Natural killer cell (primary cell): ENCODE measurements at regions of chr12 and their contacts with region 1.

Region 1: DNA sequence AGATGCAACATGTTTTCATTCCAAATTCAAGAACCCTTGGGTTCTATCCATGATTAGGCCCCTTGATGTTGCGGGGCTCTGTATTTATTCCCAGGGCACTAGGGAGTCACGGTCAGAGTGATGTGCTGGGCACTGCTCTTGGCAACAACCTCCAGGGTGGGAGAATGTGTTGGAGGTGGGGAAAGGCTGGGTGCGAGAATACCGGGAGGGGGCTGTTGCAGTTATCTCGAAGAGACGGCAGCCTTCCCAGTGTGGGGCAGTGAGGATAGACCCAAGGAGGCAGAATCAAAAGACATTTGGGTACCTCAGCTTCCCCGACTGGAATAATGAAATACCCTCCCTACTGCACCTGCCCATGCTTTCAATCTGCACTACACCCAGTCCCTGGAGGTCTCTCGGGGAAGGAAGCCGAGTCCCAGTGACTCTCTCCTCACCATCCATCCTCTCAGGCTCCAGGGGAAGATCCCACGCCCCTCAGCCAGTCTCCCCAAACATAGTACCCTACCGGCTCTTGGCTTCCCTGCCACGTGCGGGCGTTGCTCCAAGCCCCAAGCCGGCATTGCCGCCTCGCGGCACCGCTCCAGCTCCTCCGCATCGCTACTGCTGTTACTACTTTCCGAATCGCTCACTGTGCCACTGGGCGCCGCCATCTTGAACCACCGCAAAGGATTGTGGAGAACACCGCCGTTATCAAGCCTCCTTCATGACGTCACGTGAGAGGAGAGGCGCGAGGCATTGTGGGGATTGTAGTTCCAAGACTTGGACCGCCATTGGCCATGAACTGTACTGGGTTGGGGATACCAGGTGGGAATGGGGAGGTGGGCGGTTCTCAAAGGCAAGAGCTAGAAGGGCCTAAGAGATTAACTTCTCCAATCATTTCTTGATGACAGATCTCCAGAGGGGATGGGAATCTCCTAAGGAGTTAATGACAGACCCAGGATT is at the start of gene C12orf43:
- DNase-seq: peak; percentile 87 to 96
- ATAC-seq: peak; percentile 97 to 99 (median 98)
- H3K4me3 ChIP-seq: peak within 1 kb of the TSS; percentile 56
- H3K4me3 Mint-ChIP-seq: peak within 1 kb of the TSS; percentile 100
- H3K27ac ChIP-seq: peak within 1 kb of the TSS; percentile 71
- H3K27ac Mint-ChIP-seq: peak within 1 kb of the TSS; percentile 94 to 99
- H3K4me1 ChIP-seq: peaks cover 9% of the 10 kb centered on the region
- H3K4me1 Mint-ChIP-seq: peaks cover 10 to 19% of the 10 kb centered on the region in 2 donors
- H3K27me3 ChIP-seq: no peaks in the 10 kb centered on the region
- H3K27me3 Mint-ChIP-seq: no peaks in the 10 kb centered on the region
- CTCF ChIP-seq: no peak
- total RNA-seq, gene C12orf43: 16.0 to 19.9 (median 18.0) TPM

Region 2: GRCh38 chr12:121005346-121005815 is 10.7 kb before region 1 on chr12:
- intact Hi-C with region 1: no loop called
- DNase-seq: peak; percentile 45 to 65
- ATAC-seq: peak; percentile 65 to 87 (median 74)
- H3K4me3 ChIP-seq: no peak overlapping the region
- H3K4me3 Mint-ChIP-seq: no peak overlapping the region
- H3K27ac ChIP-seq: no peak overlapping the region
- H3K27ac Mint-ChIP-seq: peak overlapping the region in 1 of 2 donors; percentile 63
- H3K4me1 ChIP-seq: peaks cover 5% of the 10 kb centered on the region
- H3K4me1 Mint-ChIP-seq: peaks cover 0 to 11% of the 10 kb centered on the region in 2 donors
- H3K27me3 ChIP-seq: no peaks in the 10 kb centered on the region
- H3K27me3 Mint-ChIP-seq: no peaks in the 10 kb centered on the region
- CTCF ChIP-seq: peak; percentile 48

Region 3: DNA sequence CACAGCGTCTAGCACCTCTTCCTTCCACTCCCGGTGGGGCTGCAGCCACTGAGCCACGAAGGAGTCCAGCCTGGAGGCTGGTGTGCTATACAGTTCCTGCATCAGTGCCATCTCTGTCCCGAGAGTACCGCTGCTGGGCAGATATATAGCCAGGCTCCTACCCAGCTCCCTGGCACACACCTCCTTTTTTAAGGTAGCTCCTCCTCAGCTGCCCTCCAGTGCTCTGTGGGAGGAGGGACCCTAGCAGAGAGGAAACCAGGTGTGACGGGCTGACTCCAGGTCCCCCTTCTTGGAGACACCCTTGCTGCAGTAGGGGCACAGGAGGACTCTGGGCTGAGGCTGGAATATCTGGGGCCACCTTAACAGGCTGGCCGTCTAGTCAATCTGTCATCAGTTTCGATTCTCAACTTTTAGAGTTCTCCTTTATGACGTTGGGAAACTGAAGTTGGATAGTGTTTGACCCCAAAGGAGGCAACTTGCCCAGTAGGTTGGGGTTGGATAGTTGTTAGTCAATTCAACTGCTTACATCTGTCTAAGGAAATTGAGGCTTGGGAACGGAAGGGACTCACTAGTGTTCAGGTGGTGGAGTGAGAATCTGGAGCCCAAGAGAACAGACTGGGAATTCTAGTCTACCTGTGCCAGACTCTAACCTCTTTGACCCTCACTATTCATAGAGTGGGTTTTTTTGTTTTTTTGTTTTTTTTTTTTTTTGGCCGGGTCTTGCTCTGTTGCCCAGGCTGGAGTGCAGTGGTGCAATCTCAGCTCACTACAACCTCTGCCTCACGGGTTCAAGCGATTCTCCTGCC is 23.0 kb after region 1 on chr12 and contains the start of gene OASL:
- intact Hi-C with region 1: loop called (anchors 1 kb)
- DNase-seq: peak; percentile 67 to 81
- ATAC-seq: peak; percentile 62 to 83 (median 71)
- H3K4me3 ChIP-seq: peak within 1 kb of the TSS; percentile 60
- H3K4me3 Mint-ChIP-seq: peak within 1 kb of the TSS; percentile 97
- H3K27ac ChIP-seq: peak within 1 kb of the TSS; percentile 78
- H3K27ac Mint-ChIP-seq: peak within 1 kb of the TSS; percentile 93 to 96
- H3K4me1 ChIP-seq: peaks cover 55% of the 10 kb centered on the region
- H3K4me1 Mint-ChIP-seq: peaks cover 43 to 47% of the 10 kb centered on the region in 2 donors
- H3K27me3 ChIP-seq: no peaks in the 10 kb centered on the region
- H3K27me3 Mint-ChIP-seq: peaks cover 9 to 18% of the 10 kb centered on the region in 2 donors
- CTCF ChIP-seq: no peak
- total RNA-seq, gene OASL: 7.5 to 48.0 (median 35.2) TPM